ENCODE measurements at regions of chr6 and their contacts with region 1.

Region 1: GRCh38 chr6:106799008-106799894 is 169.9 kb downstream of the QRSL1 start:
- DNase-seq: peak; percentile 94 to 100
- H3K4me3 ChIP-seq: peak overlapping the region; percentile 42; the same call in 1 of the 2 replicates
- H3K27ac ChIP-seq: peak overlapping the region; percentile 95
- H3K4me1 ChIP-seq: peaks cover 44% of the 10 kb centered on the region
- H3K27me3 ChIP-seq: no peaks in the 10 kb centered on the region
- CTCF ChIP-seq: no peak

Region 2: DNA sequence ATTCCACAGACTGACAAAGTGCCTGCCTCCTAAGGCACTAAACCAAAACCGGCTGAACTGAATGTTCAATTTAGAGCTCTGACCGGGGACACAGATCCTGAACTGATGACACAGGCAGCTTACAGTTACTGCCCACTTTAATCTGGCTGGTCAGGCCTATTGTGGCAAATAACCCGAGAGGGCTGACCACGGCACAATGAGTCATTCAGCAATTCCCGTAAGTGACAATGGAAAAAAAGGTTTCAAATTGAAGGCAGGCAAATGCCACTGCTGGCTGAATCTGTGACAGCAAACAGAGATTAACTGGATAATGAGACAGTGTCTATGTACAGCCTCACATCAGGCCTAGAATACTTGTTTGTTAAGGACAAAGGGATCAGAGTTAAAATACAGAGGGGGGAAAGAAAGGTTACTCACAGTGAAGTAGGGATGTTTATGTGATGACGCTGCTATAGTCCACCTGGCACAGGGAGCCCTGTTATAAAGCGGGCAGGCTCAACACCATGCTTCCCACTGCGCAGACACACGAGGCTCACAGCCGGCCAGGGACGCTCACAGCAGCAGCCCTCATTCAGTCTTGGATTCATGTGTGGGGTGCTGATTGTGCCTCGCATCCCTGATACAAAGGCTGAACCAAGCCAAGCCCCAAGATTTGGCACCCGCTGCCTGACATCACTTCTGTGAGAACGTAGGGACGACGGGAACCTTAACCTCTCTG is 224.4 kb before region 1 on chr6:
- CTCF ChIA-PET with region 1: no interaction called
- POLR2A ChIA-PET with region 1: no interaction called
- intact Hi-C with region 1: loop called (anchors 2 kb)
- DNase-seq: peak; percentile 66 to 73
- H3K4me3 ChIP-seq: no peak overlapping the region
- H3K27ac ChIP-seq: no peak overlapping the region
- H3K4me1 ChIP-seq: peaks cover 9% of the 10 kb centered on the region
- H3K27me3 ChIP-seq: no peaks in the 10 kb centered on the region
- CTCF ChIP-seq: no peak

Region 3: GRCh38 chr6:106629103-106629858 is 170.0 kb before region 1 on chr6 and contains the starts of genes QRSL1 and RTN4IP1:
- CTCF ChIA-PET with region 1: no interaction called
- POLR2A ChIA-PET with region 1: no interaction called
- intact Hi-C with region 1: loop called (anchors 2 kb)
- DNase-seq: peak; percentile 83 to 88
- H3K4me3 ChIP-seq: peak within 1 kb of the TSS; percentile 96
- H3K27ac ChIP-seq: peak within 1 kb of the TSS; percentile 68
- H3K4me1 ChIP-seq: peaks cover 10% of the 10 kb centered on the region
- H3K27me3 ChIP-seq: no peaks in the 10 kb centered on the region
- CTCF ChIP-seq: no peak
- total RNA-seq, gene QRSL1: 11.7 and 13.4 TPM in 2 replicates
- total RNA-seq, gene RTN4IP1: 8.1 and 10.0 TPM in 2 replicates

Region 4: DNA sequence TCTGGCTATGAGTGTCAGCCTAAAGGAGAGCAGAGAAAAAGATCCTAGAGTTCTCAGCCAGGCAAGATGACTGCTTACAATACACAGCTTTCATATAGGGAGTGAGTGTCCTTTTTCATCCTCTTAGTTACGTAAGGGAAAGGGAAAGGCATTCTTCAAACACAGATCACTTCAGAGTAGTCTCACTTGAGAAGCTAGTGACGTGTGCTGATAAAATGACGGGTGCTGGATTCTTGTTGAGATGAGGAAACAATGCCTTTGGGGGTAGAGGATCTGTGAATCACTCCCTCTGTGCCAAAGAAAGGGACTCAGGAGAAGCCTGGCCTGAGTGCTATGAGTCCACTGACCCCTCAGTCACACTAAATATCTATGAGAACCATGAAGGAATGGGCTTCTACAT is 52.6 kb before region 1 on chr6:
- CTCF ChIA-PET with region 1: interaction called, 3 read pairs
- POLR2A ChIA-PET with region 1: interaction called, 11 read pairs
- intact Hi-C with region 1: loop called (anchors 1 kb)
- DNase-seq: peak; percentile 51 to 100
- H3K4me3 ChIP-seq: peak overlapping the region; percentile 12; the same call in 1 of the 2 replicates
- H3K27ac ChIP-seq: peak overlapping the region; percentile 98
- H3K4me1 ChIP-seq: peaks cover 62% of the 10 kb centered on the region
- H3K27me3 ChIP-seq: no peaks in the 10 kb centered on the region
- CTCF ChIP-seq: no peak

Region 5: GRCh38 chr6:106820412-106820852 is 21.2 kb after region 1 on chr6:
- CTCF ChIA-PET with region 1: no interaction called
- POLR2A ChIA-PET with region 1: interaction called, 5 read pairs
- intact Hi-C with region 1: loop called (anchors 1 kb)
- DNase-seq: peak; percentile 49 to 58
- H3K4me3 ChIP-seq: no peak overlapping the region
- H3K27ac ChIP-seq: no peak overlapping the region
- H3K4me1 ChIP-seq: no peaks in the 10 kb centered on the region; the same call in 1 of the 2 replicates
- H3K27me3 ChIP-seq: no peaks in the 10 kb centered on the region
- CTCF ChIP-seq: no peak

Region 6: GRCh38 chr6:106870069-106870468 is 70.8 kb after region 1 on chr6:
- CTCF ChIA-PET with region 1: no interaction called
- POLR2A ChIA-PET with region 1: interaction called, 3 read pairs
- intact Hi-C with region 1: loop called (anchors 1 kb)
- DNase-seq: peak; percentile 60 to 99
- H3K4me3 ChIP-seq: no peak overlapping the region
- H3K27ac ChIP-seq: peak overlapping the region; percentile 74
- H3K4me1 ChIP-seq: peaks cover 43% of the 10 kb centered on the region
- H3K27me3 ChIP-seq: no peaks in the 10 kb centered on the region
- CTCF ChIP-seq: no peak